ENCODE measurements at regions of chr6 and their contacts with region 1.

Region 1: DNA sequence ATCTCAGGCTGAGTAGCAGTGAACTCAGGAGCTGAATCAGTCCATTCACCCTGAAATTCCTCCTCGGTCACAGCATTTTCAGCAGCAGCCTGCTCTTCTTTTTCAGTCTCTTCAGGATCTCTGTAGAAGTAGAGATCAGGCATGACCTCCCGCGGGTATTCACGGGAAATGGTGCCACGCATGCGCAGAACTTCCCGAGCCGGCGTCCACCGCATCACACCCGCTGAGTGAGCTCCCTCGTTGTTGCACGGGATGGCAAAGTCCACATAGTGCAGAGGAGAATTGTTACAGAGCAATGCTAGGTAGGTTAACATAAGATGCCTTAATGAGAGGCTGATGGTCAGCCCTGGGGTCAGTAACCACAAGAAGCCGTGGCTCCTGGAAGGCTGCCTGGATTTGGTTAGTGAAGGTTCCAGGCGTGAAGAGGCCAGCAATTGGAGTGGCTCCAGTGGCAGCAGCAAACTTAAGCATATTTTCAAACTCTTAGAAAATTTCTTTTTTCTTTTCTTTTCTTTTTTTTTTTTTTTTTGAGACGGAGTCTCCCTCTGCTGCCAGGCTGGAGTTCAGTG is 113.5 kb upstream of the HDAC2 start:
- DNase-seq: no peak
- ATAC-seq: no peak
- H3K4me3 Mint-ChIP-seq: no peak overlapping the region
- H3K27ac Mint-ChIP-seq: no peak overlapping the region
- H3K4me1 Mint-ChIP-seq: no peaks in the 10 kb centered on the region
- H3K27me3 Mint-ChIP-seq: peaks cover 19% of the 10 kb centered on the region

Region 2: GRCh38 chr6:113858480-113859348 is 225.7 kb before region 1 on chr6:
- CTCF ChIA-PET with region 1: no interaction called
- POLR2A ChIA-PET with region 1: no interaction called
- intact Hi-C with region 1: no loop called
- DNase-seq: peak; percentile 89
- ATAC-seq: peak; percentile 95
- H3K4me3 Mint-ChIP-seq: no peak overlapping the region
- H3K27ac Mint-ChIP-seq: no peak overlapping the region
- H3K4me1 Mint-ChIP-seq: peaks cover 13% of the 10 kb centered on the region
- H3K27me3 Mint-ChIP-seq: peaks cover 32% of the 10 kb centered on the region

Region 3: DNA sequence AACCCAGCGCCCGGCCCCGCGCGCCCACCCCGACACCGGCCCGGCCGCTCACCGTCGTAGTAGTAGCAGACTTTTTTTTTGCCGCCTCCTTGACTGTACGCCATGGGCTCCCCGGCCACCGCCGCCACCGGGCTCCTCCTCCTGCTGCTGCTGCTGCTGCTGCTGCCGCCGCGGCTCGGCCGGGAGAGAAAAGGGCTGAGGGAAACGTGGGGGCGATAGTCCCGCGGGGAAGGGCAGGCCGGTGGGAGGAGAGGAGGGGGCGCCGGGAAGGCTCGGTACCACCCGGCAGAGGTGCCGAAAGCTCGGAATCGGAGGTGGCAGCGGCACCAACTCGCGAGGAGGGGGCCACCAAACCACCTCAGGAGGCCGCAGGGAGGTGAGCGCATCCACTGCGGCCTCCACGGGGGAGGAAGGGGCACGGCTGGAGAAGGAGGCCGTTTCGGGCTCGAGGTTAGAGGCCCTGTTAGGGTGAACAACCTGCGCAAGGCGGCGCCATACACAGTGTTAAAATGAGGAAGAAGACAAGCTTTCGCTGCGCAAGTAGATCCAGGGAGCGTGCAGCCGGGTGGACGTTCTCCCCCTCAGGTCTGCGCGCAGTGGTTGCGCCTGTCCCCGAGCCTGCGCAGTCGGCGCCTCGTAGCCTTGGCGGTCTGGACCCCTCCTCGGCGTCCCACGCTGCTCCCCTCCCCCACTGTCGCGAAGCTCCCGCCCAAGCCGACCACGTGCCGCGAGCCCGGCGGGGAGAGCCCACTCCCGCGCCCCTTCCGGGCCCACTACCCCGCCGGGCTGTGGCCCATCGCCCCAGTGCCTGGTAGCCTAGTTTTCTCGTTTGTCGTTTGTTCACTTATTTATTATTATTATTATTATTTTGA is 113.4 kb before region 1 on chr6 and contains the start of gene HDAC2:
- CTCF ChIA-PET with region 1: no interaction called
- POLR2A ChIA-PET with region 1: interaction called, 11 read pairs
- intact Hi-C with region 1: no loop called
- DNase-seq: peak; percentile 91
- ATAC-seq: peak; percentile 81
- H3K4me3 Mint-ChIP-seq: peak within 1 kb of the TSS; percentile 94
- H3K27ac Mint-ChIP-seq: peak within 1 kb of the TSS; percentile 99
- H3K4me1 Mint-ChIP-seq: peaks cover 36% of the 10 kb centered on the region
- H3K27me3 Mint-ChIP-seq: no peaks in the 10 kb centered on the region
- total RNA-seq, gene HDAC2: 96.0 to 101 TPM